ENCODE measurements at regions of chr13 and their contacts with region 1.

Region 1: DNA sequence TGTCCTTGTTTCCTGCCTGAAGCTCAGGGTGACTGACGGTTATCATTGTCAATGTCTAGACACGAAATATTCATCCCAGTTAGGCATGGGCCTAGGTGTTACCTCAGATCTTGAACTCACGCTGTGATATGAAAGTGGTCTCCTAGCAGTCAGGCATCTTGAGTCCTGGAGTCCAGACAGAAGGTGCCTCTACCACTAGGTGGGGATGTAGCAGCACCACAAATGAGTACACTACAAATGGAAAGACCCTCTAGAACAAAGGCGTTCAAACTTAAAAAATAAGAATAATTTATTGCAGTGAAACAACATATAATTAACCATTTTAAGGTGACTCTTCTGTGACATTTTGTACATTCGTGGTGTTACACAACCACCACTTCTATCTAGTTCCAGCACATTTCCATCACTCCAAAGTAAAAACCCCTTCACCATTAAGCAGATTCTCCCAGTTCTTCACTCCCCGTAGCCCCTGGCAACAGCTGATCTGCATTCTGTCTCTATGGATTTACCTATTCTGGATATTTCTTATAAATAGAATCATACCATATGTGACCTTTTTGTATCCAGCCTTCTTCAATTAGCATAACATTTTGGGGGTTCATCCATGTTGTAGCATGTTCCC is 11.9 kb upstream of the FRY start:
- DNase-seq: peak; percentile 46
- ATAC-seq: peak; percentile 49 to 66

Region 2: DNA sequence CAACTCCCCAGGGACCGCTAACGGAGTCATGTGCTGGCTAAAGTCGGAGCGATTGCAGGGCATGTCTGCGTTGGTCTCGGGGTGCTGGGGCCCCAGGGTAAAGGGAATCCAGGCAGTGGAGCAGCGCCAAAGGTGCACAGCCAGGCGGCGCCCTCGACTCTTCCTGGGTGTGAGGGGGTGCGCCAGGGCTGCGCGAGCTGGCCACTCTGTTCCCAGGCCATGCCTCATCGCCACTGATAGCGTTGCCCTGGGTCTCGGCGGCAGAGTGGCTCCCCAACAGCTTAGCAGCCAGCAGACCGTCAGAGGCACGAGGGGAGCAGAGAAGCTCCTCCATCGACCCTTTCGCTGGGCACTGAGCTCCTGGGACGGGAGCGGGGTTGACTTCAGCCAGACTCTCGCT is 667.3 kb before region 1 on chr13:
- intact Hi-C with region 1: no loop called
- DNase-seq: no peak
- ATAC-seq: no peak

Region 3: DNA sequence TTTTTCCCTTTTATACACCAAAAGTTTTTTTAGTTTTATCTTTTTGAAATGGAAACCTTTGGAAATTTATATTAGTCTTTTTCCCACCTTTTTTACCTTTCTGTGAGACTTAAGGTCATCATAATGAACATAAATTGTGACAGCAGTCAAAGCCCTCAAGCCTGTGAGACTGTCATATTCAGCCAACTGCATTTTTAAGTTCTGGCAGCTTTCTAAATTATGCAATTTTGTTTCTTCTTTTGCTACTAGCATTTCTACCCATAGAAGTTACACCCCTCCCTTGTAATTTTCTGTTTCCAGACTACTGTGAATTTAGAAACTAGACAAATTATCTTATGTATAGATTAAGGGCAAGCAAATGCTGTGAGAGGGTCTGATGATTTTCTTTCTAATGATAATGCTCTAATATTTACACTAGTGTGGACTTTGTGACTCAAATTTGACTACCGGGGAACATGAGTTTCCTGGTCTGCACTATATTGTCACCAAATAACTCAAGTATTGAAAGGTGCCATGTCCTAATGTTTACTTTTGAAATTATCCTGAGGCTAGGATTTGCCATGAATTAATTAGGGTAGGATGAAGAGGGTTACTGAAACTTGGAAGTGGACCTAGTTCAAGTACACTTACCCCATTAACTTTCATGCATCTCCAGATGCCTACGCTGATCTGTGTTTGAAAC is 55.6 kb after region 1 on chr13:
- intact Hi-C with region 1: loop called in 1 of 2 experiments (anchors 10 kb)
- DNase-seq: no peak
- ATAC-seq: no peak

Region 4: GRCh38 chr13:32310134-32310706 is 290.5 kb after region 1 on chr13:
- intact Hi-C with region 1: loop called (anchors 5 to 10 kb)
- DNase-seq: no peak
- ATAC-seq: peak; percentile 75 to 84

Region 5: GRCh38 chr13:32315238-32316027 is 295.7 kb after region 1 on chr13 and contains the starts of genes BRCA2 and ZAR1L:
- intact Hi-C with region 1: loop called (anchors 5 to 10 kb)
- DNase-seq: peak; percentile 94
- ATAC-seq: peak; percentile 98 to 99
- total RNA-seq, gene BRCA2: 1.0 to 2.1 TPM
- total RNA-seq, gene ZAR1L: not detected